ENCODE measurements at regions of chr19 and their contacts with region 1.

Region 1: DNA sequence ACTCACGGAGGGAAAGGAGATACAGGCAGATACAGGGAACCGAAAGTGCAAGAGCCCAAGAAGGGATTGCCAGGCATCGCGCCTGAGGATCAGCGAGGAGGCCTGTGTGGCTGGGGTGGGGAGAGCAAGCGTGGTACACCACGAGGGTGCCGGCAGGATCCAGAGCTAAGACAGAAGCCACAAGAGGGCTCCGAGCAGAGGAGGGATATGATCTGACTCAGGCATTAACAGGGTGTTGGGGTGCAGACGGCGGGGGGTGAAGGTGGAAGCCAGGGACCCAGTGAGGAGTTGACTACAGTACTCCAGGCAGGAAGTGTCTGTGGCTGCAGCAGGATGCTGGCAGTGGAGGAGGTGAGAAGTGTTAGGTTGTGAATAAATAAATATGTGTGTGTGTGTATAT is 5.4 kb upstream of the PPP1R37 start:
- DNase-seq: no peak
- ATAC-seq: no peak

Region 2: DNA sequence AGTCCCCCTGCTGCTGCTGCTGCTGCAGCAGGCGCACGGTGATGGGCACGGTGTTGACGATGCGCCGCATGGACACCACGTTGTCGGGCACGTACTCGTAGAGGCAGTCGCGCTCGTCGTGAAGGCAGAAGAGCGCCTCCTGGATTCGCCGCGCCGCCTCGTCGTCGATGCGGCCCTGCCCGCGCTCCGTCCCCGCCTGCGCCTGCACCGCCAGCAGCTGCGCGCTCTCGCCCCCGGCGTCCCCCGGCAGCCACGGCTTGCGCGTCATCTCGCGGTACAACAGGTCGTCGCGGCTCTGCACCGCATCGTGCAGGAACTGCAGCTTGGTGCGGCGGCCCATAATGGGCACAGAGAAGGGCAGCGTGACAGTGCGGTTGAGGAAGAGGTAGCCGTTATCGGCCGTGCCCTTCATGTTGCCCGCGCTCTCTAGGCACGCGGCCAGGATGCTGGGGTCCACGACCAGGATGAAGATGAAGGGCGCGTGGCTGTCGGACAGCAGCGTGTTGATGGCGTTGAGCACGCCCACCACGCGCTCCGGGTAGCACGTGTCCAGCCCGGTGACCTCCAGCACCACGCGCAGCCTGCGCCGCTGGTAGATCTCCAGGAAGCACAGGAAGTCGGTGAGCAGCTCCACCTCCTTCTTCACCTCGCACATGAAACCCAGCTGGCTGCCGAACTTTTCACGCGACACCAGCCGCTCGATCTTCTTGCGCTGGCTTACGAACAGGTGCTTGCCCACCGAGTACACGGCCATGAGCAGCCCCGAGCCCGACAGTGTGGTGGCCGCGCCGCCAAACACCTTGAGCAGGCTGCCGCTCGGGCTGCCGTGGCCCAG is 65.2 kb after region 1 on chr19:
- intact Hi-C with region 1: no loop called
- DNase-seq: no peak
- ATAC-seq: peak; percentile 67

Region 3: DNA sequence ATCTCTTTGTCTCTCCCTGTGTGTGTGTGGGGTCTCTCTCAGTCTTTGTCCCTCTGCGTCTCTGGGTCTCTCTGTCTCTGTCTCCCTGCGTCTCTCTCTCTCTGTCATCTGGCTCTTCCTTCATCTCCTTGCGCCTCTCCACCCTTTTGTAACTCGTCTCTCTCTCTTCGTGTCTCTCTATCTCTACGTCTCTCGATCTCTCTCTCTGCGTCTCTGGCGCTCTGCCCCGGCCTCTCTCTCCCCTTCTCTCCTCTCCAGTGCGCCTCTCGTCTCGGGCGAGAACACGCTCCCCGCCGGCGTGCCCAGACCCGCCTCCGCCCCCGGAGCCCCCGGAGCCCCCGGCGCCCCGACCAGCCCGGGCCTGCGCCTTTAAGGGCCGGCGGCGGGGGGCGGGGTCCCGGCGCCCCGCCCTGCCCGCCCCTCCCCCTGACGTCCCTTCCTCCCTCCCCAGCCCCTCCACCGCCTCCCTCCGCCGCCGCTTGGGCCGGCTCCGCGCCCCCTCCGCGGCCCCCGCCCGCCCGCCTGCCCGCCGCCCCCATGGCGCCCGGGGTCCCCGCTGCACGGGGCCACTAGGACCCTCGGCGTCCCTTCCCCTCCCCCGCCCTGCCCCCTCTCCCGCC is 163.4 kb after region 1 on chr19 and contains the start of gene MARK4:
- intact Hi-C with region 1: loop called (anchors 5 kb)
- DNase-seq: peak; percentile 75
- ATAC-seq: peak; percentile 47
- total RNA-seq, gene MARK4: 37.5 TPM

Measured in sciatic nerve (tissue), 2 donors.